ENCODE measurements at regions of chr7 and their contacts with region 1.

Region 1: GRCh38 chr7:149838224-149838947 is at the start of gene ZNF862:
- DNase-seq: peak; percentile 89
- ATAC-seq: peak; percentile 97
- H3K4me3 Mint-ChIP-seq: peak within 1 kb of the TSS; percentile 88
- H3K27ac Mint-ChIP-seq: peak within 1 kb of the TSS; percentile 82
- H3K4me1 Mint-ChIP-seq: peaks cover 20% of the 10 kb centered on the region
- H3K27me3 Mint-ChIP-seq: peaks cover 16% of the 10 kb centered on the region
- CTCF ChIP-seq: no peak
- total RNA-seq, gene ZNF862: 12.6 and 17.6 TPM in 2 replicates

Region 2: DNA sequence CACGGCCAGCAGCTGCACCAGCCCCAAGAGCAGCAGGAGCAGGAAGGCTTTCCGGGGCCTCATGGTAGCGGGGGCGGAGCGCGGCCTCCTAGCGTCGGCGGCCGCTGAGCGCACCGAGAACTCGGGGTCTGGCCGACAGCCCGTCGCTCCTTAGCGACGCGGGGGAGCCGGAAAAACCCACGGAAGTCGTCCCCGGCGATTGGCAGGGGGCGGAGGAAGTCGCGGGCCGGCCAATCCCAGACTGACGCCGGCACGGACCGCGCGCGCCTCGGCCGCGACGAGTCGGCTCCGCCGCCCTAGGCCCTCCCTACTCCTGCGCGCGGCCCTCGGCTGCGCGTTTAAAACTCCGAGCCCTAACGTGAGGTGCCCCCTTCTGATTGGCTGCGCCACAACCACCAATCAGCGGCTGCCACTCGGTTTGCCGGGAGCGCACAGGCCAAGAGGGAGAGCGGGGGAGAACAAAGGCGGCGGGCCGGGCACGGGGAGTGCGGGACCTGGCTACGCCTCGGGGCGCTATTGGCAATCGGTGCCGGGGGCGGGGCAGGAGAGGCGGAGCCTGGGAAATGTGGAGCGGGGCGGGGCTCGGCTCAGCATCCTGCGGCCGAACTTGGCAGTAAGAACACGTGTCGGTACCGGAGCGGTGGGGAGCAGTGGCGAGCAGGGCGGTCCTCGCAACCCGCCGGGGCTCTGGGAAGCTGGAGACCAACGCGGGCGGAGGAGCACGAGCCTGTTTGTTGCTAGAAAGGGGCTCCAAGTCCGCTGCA is 809.9 kb before region 1 on chr7 and contains the start of gene PDIA4:
- CTCF ChIA-PET with region 1: no interaction called
- POLR2A ChIA-PET with region 1: no interaction called
- intact Hi-C with region 1: loop called (anchors 1 kb)
- DNase-seq: peak; percentile 99
- ATAC-seq: peak; percentile 87
- H3K4me3 Mint-ChIP-seq: peak within 1 kb of the TSS; percentile 92
- H3K27ac Mint-ChIP-seq: peak within 1 kb of the TSS; percentile 89
- H3K4me1 Mint-ChIP-seq: peaks cover 39% of the 10 kb centered on the region
- H3K27me3 Mint-ChIP-seq: no peaks in the 10 kb centered on the region
- CTCF ChIP-seq: no peak
- total RNA-seq, gene PDIA4: 57.4 and 59.4 TPM in 2 replicates

Region 3: DNA sequence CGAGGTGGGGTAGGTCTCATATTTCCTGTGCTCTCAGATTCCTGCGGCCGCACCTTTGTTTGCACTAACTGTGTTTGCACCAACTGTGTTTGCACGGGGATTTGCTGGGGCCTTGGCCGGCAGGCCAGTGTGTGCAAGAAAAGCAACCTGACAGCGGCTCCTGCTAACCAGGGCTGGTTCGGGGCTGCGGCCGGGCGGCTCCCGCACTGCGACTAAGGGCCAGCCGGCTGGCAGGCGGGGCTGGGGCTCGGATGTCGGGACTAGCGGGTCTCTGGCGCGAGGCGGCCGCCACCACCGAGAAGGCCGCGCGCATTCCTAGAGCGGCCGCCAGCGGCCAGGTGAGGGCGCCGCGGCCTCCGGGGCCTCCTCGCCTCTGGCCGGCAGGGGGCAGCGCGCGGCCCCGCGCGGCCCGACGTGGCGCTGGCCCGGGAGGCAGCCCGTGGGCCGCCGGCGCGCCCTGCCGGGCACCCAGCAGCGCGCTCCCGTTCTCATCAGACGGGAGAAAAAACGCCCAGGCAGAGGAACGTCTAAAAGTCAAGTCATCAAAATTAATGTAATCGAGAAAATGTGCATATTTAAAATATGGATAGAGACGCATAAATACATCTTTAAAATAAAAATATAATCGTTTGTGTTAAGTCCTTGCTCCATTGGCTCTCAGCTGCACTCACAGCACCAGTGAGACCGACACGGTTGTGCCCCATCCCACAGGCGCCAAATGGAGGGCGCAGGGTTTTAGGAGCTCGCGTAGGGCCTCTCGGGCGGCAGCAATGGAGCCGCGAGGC is 416.1 kb before region 1 on chr7:
- CTCF ChIA-PET with region 1: no interaction called
- POLR2A ChIA-PET with region 1: interaction called, 5 read pairs
- intact Hi-C with region 1: loop called (anchors 1 kb)
- DNase-seq: peak; percentile 79
- ATAC-seq: peak; percentile 98
- H3K4me3 Mint-ChIP-seq: peak overlapping the region; percentile 84
- H3K27ac Mint-ChIP-seq: peak overlapping the region; percentile 74
- H3K4me1 Mint-ChIP-seq: peaks cover 8% of the 10 kb centered on the region
- H3K27me3 Mint-ChIP-seq: no peaks in the 10 kb centered on the region
- CTCF ChIP-seq: no peak

Region 4: GRCh38 chr7:149714050-149714909 is 124.1 kb before region 1 on chr7:
- CTCF ChIA-PET with region 1: no interaction called
- POLR2A ChIA-PET with region 1: interaction called, 9 read pairs
- intact Hi-C with region 1: loop called (anchors 1 kb)
- DNase-seq: peak; percentile 88
- ATAC-seq: peak; percentile 91
- H3K4me3 Mint-ChIP-seq: peak overlapping the region; percentile 83
- H3K27ac Mint-ChIP-seq: no peak overlapping the region
- H3K4me1 Mint-ChIP-seq: peaks cover 17% of the 10 kb centered on the region
- H3K27me3 Mint-ChIP-seq: no peaks in the 10 kb centered on the region
- CTCF ChIP-seq: no peak

Region 5: GRCh38 chr7:150368096-150368883 is 529.9 kb after region 1 on chr7 and contains the start of gene REPIN1:
- CTCF ChIA-PET with region 1: no interaction called
- POLR2A ChIA-PET with region 1: interaction called, 3 read pairs
- intact Hi-C with region 1: loop called (anchors 2 kb)
- DNase-seq: peak; percentile 85
- ATAC-seq: peak; percentile 43
- H3K4me3 Mint-ChIP-seq: peak within 1 kb of the TSS; percentile 95
- H3K27ac Mint-ChIP-seq: peak within 1 kb of the TSS; percentile 95
- H3K4me1 Mint-ChIP-seq: peaks cover 72% of the 10 kb centered on the region
- H3K27me3 Mint-ChIP-seq: no peaks in the 10 kb centered on the region
- CTCF ChIP-seq: no peak
- total RNA-seq, gene REPIN1: 106 and 116 TPM in 2 replicates

Region 6: GRCh38 chr7:151057989-151058780 is 1219.8 kb after region 1 on chr7:
- CTCF ChIA-PET with region 1: no interaction called
- POLR2A ChIA-PET with region 1: no interaction called
- intact Hi-C with region 1: loop called (anchors 10 kb)
- DNase-seq: peak; percentile 91
- ATAC-seq: peak; percentile 93
- H3K4me3 Mint-ChIP-seq: peak overlapping the region; percentile 92
- H3K27ac Mint-ChIP-seq: peak overlapping the region; percentile 89
- H3K4me1 Mint-ChIP-seq: peaks cover 36% of the 10 kb centered on the region
- H3K27me3 Mint-ChIP-seq: no peaks in the 10 kb centered on the region
- CTCF ChIP-seq: no peak

Region 7: GRCh38 chr7:151351027-151351426 is 1512.6 kb after region 1 on chr7:
- CTCF ChIA-PET with region 1: no interaction called
- POLR2A ChIA-PET with region 1: no interaction called
- intact Hi-C with region 1: loop called (anchors 10 kb)
- DNase-seq: peak; percentile 35
- ATAC-seq: peak; percentile 13
- H3K4me3 Mint-ChIP-seq: no peak overlapping the region
- H3K27ac Mint-ChIP-seq: peak overlapping the region; percentile 94
- H3K4me1 Mint-ChIP-seq: peaks cover 51% of the 10 kb centered on the region
- H3K27me3 Mint-ChIP-seq: no peaks in the 10 kb centered on the region
- CTCF ChIP-seq: no peak